Left ventricle myocardium inferior (tissue), 1 donor: ENCODE measurements at regions of chr5 and their contacts with region 1.

Region 1: DNA sequence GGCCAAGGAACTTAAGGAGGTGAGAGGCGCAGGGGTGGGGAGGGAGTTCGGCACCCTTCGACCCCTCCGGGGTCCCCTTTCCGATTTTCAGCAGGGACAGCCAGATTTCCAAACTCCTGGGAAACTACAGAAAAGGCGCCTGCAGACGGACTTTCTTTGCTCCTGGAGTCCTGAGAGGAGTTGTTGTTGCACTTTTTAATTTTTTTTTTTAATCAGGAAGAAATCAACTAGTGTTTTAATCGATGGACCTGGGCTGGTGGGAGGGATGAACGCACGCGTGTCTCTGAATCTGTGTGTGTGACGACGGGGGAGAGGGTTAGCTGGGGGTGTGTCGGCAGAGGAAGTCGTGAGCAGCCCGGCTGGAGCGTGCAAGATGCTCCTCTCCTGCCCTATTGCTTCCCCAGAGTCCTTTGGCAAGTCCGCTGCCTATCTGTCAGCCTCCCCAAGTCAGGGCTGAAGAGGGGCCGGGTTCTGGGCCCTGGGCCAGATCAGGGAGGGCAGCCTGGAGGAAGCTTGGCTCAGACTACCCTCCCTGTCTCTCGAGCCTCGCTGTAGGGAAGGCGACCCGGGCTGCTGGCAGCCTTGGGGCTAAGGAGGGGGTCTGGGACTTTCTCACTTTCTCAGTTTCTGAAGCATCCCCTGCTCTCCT is 651 bp downstream of the PRR16 start:
- DNase-seq: peak; percentile 57
- H3K4me3 ChIP-seq: peak overlapping the region; percentile 81
- H3K27ac ChIP-seq: peak overlapping the region; percentile 86
- H3K4me1 ChIP-seq: peaks cover 51% of the 10 kb centered on the region
- H3K27me3 ChIP-seq: no peaks in the 10 kb centered on the region
- CTCF ChIP-seq: no peak

Region 2: DNA sequence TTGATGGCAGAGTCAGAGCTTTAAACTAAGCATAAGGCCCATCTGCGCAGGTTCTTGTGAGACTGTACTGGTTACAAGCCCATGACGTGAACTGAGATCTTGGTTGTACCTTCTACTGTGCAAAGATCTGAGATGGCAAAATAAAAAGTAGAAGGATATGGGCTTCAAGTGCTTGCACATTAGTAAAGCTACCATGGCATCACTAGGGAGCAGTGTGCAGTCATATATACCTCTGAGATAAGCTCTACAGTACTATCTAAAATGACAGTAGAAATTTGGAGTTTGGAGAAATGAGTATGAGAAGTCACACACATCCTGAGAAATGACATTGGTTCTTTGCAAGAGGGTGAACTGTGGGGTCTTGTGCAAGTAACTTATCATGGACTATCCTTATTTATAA is 408.9 kb before region 1 on chr5:
- intact Hi-C with region 1: loop called (anchors 5 kb)
- DNase-seq: no peak
- H3K4me3 ChIP-seq: no peak overlapping the region
- H3K27ac ChIP-seq: peak overlapping the region; percentile 83
- H3K4me1 ChIP-seq: peaks cover 44% of the 10 kb centered on the region
- H3K27me3 ChIP-seq: no peaks in the 10 kb centered on the region
- CTCF ChIP-seq: peak; percentile 37